ENCODE measurements at regions of chr13 and their contacts with region 1.

Region 1: DNA sequence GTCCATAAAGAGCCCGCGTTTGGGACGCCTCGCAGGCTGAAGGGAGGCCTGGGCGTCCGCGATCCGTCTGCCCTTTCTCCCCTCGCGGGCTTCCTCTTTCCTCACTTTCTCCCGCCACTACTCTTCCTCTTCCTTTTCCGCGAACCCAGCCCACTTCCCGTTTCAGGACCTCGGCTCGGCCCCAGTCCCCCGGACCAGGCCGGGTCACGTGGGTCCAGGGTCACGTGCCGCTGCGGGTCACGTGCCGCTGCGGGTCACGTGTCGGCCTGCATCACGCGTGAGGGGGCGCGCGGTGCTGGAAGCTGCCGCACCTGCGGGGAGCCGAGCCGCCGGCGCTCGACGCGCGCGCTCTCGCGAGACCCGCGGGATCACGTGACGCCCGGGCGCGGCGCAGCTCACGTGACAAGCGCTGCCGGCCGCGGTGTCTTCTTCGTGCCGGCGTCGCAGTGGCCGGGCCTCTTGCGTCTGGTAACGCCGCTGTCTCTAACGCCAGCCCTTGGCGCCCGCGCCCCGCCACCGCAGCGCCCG is at the start of gene LAMP1:
- DNase-seq: peak; percentile 99
- ATAC-seq: peak; percentile 88
- H3K4me3 Mint-ChIP-seq: peak within 1 kb of the TSS; percentile 89
- H3K27ac Mint-ChIP-seq: peak within 1 kb of the TSS; percentile 100
- H3K4me1 Mint-ChIP-seq: peaks cover 31% of the 10 kb centered on the region
- H3K27me3 Mint-ChIP-seq: peaks cover 10% of the 10 kb centered on the region
- total RNA-seq, gene LAMP1: 32.2 to 36.0 TPM

Region 2: DNA sequence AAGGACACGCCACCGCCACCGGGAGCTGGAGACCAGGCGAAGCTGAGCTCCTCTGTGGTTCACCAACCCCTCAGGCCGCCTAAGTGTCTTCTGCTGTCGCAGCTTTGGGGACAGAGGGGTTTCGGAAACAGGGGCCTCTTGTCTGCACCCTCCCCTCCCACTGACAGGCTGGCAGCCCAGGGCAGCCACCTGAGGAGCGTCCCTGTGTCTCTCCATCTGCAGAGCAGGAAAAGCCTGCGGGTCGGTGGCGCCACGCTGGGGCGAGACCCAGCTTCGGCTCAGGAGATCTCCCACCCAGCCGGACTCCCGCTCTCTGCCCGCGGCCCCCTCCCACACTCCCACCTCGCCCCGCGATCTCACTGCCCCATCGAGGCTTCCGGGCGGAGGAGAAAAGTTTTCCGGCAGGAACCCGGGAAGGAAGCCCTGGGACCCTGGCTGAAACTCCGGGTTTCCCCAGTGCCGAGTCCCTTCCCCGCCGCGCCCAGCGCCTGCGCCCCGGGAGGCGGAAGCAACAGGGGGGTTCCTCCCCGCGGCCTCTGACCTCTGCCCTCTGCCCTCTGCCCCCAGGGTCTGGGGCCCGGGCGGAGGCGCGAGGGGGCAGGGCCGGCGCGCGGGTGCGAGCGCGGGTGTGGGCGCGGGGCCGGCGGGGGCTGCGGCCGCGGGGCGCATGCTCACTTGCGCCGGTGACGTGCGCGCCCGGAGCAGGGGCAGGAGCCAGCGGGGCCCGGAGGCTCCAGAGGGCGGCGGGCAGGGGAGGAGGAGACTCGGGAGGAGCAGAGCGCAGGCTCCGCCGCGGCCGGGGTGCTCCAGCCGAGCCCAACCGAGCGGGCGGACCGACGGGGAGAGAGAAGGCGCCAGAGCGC is 607.4 kb before region 1 on chr13 and contains the start of gene ATP11A:
- CTCF ChIA-PET with region 1: no interaction called
- POLR2A ChIA-PET with region 1: no interaction called
- intact Hi-C with region 1: loop called in 1 of 2 experiments (anchors 2 kb)
- DNase-seq: peak; percentile 90
- ATAC-seq: peak; percentile 84
- H3K4me3 Mint-ChIP-seq: peak within 1 kb of the TSS; percentile 84
- H3K27ac Mint-ChIP-seq: peak within 1 kb of the TSS; percentile 91
- H3K4me1 Mint-ChIP-seq: peaks cover 49% of the 10 kb centered on the region
- H3K27me3 Mint-ChIP-seq: no peaks in the 10 kb centered on the region
- total RNA-seq, gene ATP11A: 42.1 to 50.7 TPM

Region 3: DNA sequence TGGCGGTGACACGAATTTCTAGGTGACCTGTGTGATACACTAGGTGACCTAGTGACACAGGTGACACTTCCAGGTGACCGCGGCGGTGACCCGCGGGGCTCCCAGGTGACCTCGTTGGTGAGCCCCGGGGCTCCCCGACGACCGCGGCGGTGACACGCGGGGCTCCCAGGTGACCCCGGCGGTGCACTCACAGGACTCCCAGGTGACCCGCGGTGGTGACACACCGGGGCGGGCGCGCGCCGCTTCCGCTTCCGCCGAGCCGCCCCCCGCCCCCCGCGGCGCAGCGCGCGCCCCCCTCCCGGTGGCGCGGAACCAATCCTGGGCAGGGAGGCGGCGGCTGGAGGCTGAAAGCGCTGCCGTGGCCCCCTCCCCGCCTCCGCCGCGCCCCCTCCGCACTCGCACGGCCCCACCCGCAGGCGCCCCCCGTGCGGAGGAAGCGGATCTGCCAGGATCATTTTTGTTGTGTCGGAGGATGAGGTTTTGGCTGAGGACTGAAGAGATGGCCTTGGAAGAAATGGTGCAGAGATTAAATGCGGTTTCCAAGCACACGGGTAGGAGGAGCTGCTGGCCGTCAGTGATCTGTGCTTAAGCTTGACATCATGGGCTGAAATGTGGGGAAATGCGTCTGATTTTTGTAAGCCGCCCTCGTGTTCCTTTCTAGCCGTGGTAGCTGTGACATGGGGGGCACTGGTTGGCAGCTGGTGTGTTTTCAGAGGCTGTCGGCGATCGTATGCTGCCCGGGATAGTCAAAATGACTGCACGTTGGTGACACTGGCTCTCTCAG is 327.8 kb before region 1 on chr13 and contains the start of gene MCF2L:
- CTCF ChIA-PET with region 1: no interaction called
- POLR2A ChIA-PET with region 1: no interaction called
- intact Hi-C with region 1: loop called in 1 of 2 experiments (anchors 2 kb)
- DNase-seq: peak; percentile 82
- ATAC-seq: peak; percentile 82
- H3K4me3 Mint-ChIP-seq: peak within 1 kb of the TSS; percentile 93
- H3K27ac Mint-ChIP-seq: peak within 1 kb of the TSS; percentile 93
- H3K4me1 Mint-ChIP-seq: peaks cover 22% of the 10 kb centered on the region
- H3K27me3 Mint-ChIP-seq: no peaks in the 10 kb centered on the region
- total RNA-seq, gene MCF2L: 8.4 to 8.7 TPM

Region 4: DNA sequence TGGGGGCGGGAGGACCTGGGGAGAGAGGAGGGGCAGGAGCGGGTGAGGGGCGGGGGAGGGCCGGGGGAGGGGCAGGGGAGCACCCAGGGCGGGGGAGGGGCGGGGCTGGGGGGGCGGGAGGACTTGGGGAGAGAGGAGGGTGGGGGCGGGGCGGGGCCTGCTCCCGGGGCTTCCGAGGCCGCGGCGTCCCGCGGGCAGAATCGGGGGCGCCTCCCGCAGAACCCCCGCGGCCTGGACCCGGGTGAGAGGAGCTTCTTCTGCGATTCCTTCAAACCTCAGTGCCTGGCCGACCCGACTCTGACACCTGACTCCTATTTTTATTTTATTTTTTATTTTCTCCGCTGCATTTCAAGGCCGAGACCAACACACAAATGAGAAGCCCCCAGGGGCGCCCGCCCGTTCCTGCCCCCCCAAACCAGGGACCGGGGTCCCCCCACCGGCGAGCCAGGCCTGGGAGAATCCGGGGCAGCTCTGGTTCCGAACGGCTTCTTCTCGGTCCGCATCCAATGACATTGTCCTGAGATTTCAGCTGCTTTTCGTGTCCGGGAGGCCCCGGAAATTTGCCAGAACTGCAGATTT is 67.5 kb after region 1 on chr13:
- CTCF ChIA-PET with region 1: no interaction called
- POLR2A ChIA-PET with region 1: no interaction called
- intact Hi-C with region 1: loop called in 1 of 2 experiments (anchors 1 kb)
- DNase-seq: no peak
- ATAC-seq: no peak
- H3K4me3 Mint-ChIP-seq: no peak overlapping the region
- H3K27ac Mint-ChIP-seq: no peak overlapping the region
- H3K4me1 Mint-ChIP-seq: peaks cover 4% of the 10 kb centered on the region
- H3K27me3 Mint-ChIP-seq: peaks cover 18% of the 10 kb centered on the region

Region 5: GRCh38 chr13:113490496-113491417 is 193.9 kb after region 1 on chr13 and contains the start of gene DCUN1D2:
- CTCF ChIA-PET with region 1: no interaction called
- POLR2A ChIA-PET with region 1: no interaction called
- intact Hi-C with region 1: loop called in 1 of 2 experiments (anchors 1 kb)
- DNase-seq: peak; percentile 83
- ATAC-seq: peak; percentile 72
- H3K4me3 Mint-ChIP-seq: peak within 1 kb of the TSS; percentile 85
- H3K27ac Mint-ChIP-seq: peak within 1 kb of the TSS; percentile 86
- H3K4me1 Mint-ChIP-seq: peaks cover 64% of the 10 kb centered on the region
- H3K27me3 Mint-ChIP-seq: no peaks in the 10 kb centered on the region
- total RNA-seq, gene DCUN1D2: 12.1 to 15.3 TPM

Region 6: GRCh38 chr13:114047358-114047881 is 750.5 kb after region 1 on chr13:
- CTCF ChIA-PET with region 1: no interaction called
- POLR2A ChIA-PET with region 1: no interaction called
- intact Hi-C with region 1: no loop called
- DNase-seq: no peak
- ATAC-seq: no peak
- H3K4me3 Mint-ChIP-seq: no peak overlapping the region
- H3K27ac Mint-ChIP-seq: peak overlapping the region; percentile 33
- H3K4me1 Mint-ChIP-seq: peaks cover 61% of the 10 kb centered on the region
- H3K27me3 Mint-ChIP-seq: no peaks in the 10 kb centered on the region

Region 7: DNA sequence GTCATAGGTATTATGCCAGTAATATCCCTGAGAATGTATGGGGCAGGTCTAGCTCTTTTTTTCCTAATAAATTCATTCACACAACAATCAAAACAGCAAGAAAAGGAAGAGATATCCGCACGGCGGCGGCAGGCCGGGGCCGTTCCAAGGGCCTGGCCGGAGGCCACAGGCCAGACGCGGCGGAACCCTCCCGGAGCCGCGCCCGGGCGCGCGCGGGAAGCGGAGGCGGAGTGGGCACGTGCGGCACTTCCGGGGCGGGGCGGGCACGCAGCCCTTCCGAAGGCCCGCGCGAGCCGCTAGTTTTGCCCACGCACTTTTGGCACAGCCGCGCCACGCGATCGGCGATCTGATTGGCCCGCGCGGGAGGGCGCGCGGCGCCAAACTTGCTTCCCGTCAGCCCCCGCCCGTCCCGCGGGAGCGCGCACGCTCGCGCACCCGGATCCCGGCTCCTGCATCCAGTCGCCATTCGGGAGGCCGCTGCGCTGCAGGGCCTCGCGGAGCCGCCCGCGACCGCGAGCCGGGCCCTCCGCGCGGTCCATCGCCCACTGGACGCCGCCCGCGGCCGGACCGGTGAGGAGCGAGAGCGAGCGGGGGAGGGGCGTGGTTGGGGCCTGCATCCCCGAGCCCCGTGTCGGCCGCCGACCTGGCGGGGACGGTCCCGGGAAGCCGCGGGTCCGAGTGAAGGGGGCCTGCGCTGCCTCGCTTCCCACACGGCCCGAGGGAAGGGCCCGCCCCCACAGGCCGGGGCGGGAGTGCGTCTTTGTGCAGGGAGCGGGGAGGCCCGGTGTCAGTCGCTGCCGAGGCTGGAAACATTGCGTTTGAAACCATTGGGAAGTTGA is 1017.4 kb after region 1 on chr13 and contains the start of gene CHAMP1:
- CTCF ChIA-PET with region 1: no interaction called
- POLR2A ChIA-PET with region 1: no interaction called
- intact Hi-C with region 1: loop called in 1 of 2 experiments (anchors 1 kb)
- DNase-seq: peak; percentile 97
- ATAC-seq: peak; percentile 77
- H3K4me3 Mint-ChIP-seq: peak within 1 kb of the TSS; percentile 97
- H3K27ac Mint-ChIP-seq: peak within 1 kb of the TSS; percentile 98
- H3K4me1 Mint-ChIP-seq: peaks cover 43% of the 10 kb centered on the region
- H3K27me3 Mint-ChIP-seq: no peaks in the 10 kb centered on the region
- total RNA-seq, gene CHAMP1: 39.4 to 54.3 TPM